Heart right ventricle (tissue), 16 donors: ENCODE measurements at regions of chr1 and their contacts with region 1.

Region 1: DNA sequence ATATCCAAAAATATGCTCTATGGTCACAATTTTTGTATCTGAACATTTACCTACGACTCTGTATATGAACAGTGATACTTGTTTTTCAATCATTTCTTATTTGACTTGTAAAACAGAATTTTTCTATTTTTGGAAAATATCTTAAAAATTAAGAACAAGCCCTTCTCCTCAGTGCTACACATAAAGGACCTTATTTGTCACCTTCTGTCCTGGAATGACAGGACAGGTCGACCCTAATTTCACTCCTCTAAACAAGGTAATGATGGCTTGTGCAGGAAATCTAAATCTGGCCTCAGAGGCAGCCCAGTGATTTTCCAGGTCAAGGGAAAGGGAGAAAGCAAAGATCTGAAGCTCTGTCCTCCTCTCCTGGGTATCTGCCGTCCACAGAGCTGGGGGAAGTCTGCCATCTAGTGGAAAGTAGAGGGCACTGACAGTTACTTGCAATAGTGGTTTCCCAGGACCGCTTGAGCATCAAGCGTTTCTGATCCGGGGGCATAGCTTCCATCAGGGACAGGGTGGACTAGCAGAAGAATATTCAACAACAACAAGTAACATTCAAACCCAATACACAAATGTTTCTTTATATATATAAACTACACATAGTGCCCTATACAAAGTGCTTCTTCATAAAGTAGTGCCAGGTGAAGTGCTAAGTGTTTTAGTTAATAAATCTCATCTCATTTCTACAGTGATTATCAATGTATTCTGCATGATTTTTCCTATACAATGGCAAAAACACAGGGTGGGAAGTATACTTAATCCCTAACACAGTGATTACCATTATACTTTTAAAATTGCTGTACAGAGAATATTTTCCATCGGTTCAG is 74.6 kb downstream of the SLC25A24 start:
- DNase-seq: peak in 1 of 2 donors; percentile 77
- ATAC-seq: peak; percentile 90 to 95 (median 91)
- H3K4me3 ChIP-seq: no peak overlapping the region
- H3K27ac ChIP-seq: peak overlapping the region in 1 of 10 donors; percentile 21
- H3K4me1 ChIP-seq: peaks cover 0 to 32% (median 0%) of the 10 kb centered on the region in 9 donors
- H3K27me3 ChIP-seq: no peaks in the 10 kb centered on the region
- CTCF ChIP-seq: peak; percentile 87 to 98 (median 95)

Region 2: DNA sequence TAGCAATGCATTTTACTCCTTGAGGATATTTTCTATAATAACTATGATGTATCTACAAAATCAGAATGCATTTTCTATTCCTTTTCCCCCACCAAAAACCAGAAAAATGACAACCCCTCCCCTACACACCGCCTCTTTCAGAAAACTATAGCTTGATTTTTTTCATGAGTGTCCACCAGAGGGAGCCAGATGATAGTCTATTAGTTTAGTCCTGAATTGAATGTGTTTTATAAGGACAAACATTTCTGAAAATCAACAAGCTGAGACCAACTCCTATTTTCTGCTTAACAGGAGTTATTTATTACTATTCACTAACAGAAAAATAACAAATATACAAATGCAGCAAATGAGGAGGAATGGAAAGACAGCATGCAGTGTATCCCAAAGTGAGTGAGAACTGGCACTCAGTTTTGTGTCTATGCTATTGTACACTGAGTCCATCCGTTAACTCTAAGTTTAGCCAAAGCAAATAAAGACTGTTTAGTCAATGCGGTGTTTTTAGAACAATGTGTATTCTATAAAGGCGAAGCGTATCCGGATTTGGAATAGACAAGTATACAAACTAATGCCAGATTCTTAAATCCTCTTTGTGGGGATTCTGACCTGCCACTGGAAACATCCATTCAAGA is 343.2 kb before region 1 on chr1:
- intact Hi-C with region 1: loop called (anchors 1 to 5 kb)
- DNase-seq: peak in 1 of 2 donors; percentile 70
- ATAC-seq: peak in 7 of 8 donors; percentile 39 to 82 (median 71)
- H3K4me3 ChIP-seq: no peak overlapping the region
- H3K27ac ChIP-seq: peak overlapping the region in 1 of 10 donors; percentile 6
- H3K4me1 ChIP-seq: peaks cover 0 to 30% (median 9%) of the 10 kb centered on the region in 9 donors
- H3K27me3 ChIP-seq: no peaks in the 10 kb centered on the region
- CTCF ChIP-seq: peak; percentile 48 to 87 (median 76)

Region 3: DNA sequence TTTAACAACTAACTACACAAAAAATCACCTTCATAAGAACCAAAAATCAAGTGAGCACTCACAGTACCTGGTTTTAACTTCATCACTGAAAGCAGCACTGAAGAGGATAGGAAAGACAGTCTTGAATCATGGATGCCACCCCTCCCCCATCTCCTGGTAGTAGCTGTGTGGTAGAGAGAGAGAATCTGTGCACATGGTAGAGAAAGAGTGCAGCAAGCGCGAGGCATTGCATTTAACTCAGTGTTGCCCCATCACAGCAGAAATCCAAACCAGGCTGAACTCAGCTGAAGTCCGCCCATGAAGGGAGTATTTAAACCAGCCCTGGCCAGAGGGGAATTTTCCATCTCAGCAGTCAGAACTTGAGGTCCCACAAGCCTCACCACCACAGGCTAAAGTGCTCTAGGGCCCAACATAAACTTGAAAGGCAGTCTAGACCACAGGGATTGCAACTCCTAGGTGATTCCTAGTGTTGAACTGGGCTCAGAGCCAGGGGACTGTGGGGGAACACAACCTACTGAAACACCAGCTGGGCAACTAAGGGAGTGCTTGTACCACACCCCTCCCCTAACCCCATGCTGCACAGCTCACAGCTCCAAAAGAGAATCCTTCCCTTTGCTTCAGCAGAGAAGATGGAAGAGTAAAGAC is 199.0 kb before region 1 on chr1:
- intact Hi-C with region 1: no loop called
- DNase-seq: no peak
- ATAC-seq: no peak
- H3K4me3 ChIP-seq: no peak overlapping the region
- H3K27ac ChIP-seq: no peak overlapping the region
- H3K4me1 ChIP-seq: peaks cover 0 to 8% (median 0%) of the 10 kb centered on the region in 9 donors
- H3K27me3 ChIP-seq: no peaks in the 10 kb centered on the region
- CTCF ChIP-seq: no peak

Region 4: DNA sequence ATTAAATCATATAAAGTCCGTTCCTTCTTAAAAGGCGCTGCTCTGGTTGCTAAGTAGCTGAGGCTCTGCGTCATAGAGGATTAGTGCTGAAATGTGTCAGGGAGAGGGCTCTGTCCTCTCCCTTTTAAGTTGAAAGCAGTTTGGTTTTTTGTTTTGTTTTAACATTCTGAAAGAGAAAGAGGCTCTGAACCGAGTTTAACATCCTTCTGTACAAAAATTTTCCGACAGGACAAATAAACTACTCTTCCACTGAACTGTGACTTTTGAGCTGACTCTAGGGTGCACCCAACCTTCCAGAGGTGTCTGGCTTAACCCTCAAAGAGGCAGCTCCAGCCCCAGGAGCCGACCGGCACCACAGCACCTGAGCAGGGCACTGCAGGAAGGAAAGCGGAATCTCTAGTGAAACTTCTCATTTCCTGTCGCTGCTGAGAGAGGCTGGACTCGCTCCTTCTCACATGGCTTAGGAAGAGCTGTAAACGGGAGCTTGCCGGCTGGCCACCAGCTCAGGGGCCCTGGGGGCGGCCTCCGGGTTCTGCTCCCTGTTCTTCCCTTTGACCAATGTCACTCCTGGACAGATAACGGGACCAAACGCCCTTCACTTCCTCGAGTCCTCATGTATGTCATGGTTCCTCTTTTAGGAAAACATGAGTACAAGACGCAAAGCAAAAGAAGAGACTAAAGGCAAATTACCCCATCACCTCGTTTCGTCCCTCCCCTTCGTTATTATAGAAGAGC is 161.8 kb before region 1 on chr1:
- intact Hi-C with region 1: loop called in 4 of 10 experiments (anchors 10 kb)
- DNase-seq: peak; percentile 19
- ATAC-seq: peak; percentile 19 to 71 (median 58)
- H3K4me3 ChIP-seq: peak overlapping the region; percentile 40 to 84 (median 66)
- H3K27ac ChIP-seq: peak overlapping the region; percentile 39 to 88 (median 71)
- H3K4me1 ChIP-seq: peaks cover 0 to 31% (median 13%) of the 10 kb centered on the region in 9 donors
- H3K27me3 ChIP-seq: peaks cover 0 to 12% (median 0%) of the 10 kb centered on the region in 7 donors
- CTCF ChIP-seq: no peak

Region 5: DNA sequence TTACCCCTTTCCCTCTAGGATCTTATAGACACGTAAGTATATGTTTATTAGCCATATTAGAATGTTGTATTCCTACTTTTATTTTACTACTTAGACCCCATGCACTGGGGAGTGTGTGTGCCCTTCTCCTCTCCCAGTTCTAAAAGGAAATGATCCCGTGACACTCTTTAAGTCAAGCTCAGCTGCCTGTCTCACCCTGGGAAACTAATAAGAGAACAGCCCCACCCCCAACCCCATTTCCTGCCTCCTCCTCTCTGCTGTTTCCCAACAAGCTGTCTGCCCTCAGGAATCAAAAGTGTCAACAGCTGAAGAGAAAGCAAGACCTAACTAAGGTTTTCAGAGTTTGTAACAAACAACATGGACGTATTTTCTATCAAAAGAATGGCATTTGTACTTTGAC is 68.0 kb before region 1 on chr1:
- intact Hi-C with region 1: loop called in 1 of 10 experiments (anchors 10 kb)
- DNase-seq: peak; percentile 20 to 60
- ATAC-seq: peak in 6 of 8 donors; percentile 52 to 70 (median 58)
- H3K4me3 ChIP-seq: no peak overlapping the region
- H3K27ac ChIP-seq: peak overlapping the region in 1 of 10 donors; percentile 67
- H3K4me1 ChIP-seq: peaks cover 0 to 57% (median 16%) of the 10 kb centered on the region in 9 donors
- H3K27me3 ChIP-seq: no peaks in the 10 kb centered on the region
- CTCF ChIP-seq: no peak

Region 6: DNA sequence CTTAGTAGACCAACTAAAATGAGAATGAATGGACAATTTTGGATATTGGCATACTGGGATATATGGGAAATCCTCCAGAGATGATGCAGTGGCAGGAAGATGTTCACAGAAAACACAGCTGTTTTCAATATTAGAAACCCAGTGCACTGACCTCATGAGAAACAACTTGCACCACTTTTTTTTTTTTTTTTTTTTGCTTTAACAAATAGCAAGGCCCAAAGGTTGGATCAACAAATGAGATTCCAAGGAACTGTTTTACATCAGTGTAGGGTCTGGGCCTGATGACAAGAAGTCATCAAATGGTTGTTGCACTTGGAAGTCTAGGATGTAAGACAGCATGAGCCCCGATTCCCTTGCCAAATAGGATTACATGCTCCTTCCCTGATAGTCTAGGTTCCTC is 36.0 kb before region 1 on chr1:
- intact Hi-C with region 1: no loop called
- DNase-seq: no peak
- ATAC-seq: peak in 7 of 8 donors; percentile 33 to 75 (median 65)
- H3K4me3 ChIP-seq: no peak overlapping the region
- H3K27ac ChIP-seq: no peak overlapping the region
- H3K4me1 ChIP-seq: peaks cover 0 to 11% (median 0%) of the 10 kb centered on the region in 9 donors
- H3K27me3 ChIP-seq: no peaks in the 10 kb centered on the region
- CTCF ChIP-seq: no peak

Region 7: GRCh38 chr1:108327534-108328462 is 202.3 kb after region 1 on chr1:
- intact Hi-C with region 1: no loop called
- DNase-seq: no peak
- ATAC-seq: no peak
- H3K4me3 ChIP-seq: no peak overlapping the region
- H3K27ac ChIP-seq: no peak overlapping the region
- H3K4me1 ChIP-seq: no peaks in the 10 kb centered on the region
- H3K27me3 ChIP-seq: peaks cover 0 to 10% (median 0%) of the 10 kb centered on the region in 7 donors
- CTCF ChIP-seq: no peak

Region 8: DNA sequence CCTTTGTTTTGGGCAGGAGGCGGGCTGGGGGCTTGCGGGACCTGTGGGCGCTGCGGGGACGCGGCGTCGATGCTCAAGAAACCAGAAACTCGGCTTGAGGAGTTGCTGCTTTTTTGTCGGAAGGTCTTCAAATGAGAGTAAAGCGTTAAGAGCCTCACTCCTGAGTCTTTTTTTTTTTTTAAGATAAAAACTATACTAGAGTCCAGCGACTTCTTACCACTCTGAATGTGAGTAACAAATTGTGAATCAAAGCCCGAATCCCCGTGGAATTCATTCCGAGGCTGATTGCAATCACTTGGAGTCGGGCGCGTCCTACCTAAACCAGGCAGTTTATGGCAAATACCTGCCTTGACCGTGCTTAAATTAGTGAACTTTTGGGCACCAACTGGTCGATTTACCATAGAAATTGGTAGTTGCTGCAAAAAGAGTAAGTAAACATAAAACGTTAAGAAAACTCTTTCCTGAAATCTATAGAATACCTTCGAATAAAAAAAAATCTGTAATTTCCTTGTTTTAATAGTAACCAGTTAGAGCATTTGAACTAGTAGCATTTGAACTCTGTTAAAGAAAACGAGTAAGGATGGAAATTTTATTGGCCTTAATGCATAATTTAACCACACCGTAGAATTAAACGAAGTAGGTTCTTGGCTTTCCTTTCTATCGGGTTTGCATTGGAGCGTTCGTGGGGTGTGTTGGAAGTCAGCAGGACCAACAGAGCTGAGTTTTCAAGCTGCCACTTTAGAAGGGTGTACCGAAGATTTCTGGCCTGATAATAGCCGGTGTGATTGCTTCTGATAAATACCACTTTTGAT is 752.0 kb after region 1 on chr1:
- intact Hi-C with region 1: loop called in 1 of 10 experiments (anchors 10 kb)
- DNase-seq: no peak
- ATAC-seq: no peak
- H3K4me3 ChIP-seq: peak overlapping the region; percentile 57 to 95 (median 86)
- H3K27ac ChIP-seq: peak overlapping the region in 7 of 10 donors; percentile 32 to 83 (median 43)
- H3K4me1 ChIP-seq: peaks cover 0 to 35% (median 11%) of the 10 kb centered on the region in 9 donors
- H3K27me3 ChIP-seq: no peaks in the 10 kb centered on the region
- CTCF ChIP-seq: no peak